SK-MEL-5 (cell line): ENCODE measurements at regions of chr9 and their contacts with region 1.

Region 1: DNA sequence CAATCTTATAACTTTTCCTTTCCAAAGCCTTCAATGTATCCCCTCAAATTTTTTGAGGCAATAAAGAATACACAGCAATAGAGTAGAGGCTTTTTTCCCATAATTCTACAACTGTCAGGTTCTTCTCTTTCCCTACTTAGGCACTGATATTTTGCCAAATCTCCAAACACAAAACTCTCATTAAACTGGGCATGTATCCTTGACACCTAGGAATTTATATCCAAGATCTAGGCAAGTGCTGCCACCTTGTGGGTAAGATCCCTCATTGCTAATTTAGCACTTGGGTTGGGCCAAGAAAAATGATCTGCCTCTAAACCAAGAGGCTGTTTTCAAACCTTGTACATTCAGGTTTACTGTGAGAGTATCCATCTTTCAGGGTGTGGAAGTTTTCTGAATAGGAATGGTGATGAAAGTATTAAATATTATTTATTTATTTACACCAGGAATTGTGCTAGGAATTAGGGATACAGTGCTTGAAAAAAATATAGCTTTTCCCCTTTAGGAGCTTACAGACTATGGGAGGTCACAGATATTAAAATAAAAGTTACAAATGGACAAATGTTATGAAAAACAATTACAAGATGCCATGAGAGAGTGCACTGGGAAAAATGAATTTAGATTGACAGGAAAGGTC is 17.6 kb downstream of the TSTD2 start:
- DNase-seq: peak; percentile 77

Region 2: DNA sequence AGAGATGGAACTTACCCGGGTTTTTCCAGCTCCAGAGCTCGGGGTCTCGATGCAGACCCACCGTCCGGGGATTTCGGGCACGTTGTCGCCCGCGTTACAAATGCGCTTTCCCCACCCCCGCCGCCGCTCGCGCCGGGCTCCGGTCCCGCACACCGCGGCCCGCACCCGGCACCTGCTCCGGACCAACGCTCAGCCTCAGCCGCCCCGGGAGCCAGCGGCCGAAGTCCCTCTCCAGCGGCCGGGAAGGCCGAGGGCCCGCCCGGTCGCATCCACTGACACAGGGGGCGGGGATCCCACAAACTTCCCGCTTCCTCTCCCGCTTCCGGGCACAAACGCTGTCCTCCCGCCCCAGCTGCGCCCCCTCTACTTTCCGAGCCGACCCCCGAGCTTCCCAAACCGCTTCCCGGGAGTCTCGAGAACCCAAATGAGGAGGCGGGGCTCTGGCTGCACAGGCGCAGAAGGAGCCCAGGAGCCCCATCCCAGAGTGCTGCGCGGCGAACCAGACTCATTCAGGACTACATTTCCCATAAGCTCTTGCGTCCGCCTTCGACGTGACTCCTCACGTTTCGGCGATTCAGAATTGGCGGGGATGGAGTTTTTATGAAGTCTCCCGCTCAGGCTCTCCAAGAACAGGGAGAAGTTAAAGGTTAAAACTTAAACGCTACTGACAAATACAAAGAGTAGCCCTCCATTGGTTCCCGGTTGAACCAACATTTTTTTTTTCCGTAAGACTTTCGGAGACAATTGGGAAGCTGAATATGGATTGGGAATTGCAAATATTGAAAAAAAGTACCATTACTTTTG is 761.3 kb before region 1 on chr9 and contains the start of gene ZNF782:
- in situ Hi-C with region 1: loop called (anchors 25 kb)
- DNase-seq: peak; percentile 95
- total RNA-seq, gene ZNF782: 4.4 and 4.8 TPM in 2 replicates